PC-3 (cell line): ENCODE measurements at regions of chr5 and their contacts with region 1.

Region 1: DNA sequence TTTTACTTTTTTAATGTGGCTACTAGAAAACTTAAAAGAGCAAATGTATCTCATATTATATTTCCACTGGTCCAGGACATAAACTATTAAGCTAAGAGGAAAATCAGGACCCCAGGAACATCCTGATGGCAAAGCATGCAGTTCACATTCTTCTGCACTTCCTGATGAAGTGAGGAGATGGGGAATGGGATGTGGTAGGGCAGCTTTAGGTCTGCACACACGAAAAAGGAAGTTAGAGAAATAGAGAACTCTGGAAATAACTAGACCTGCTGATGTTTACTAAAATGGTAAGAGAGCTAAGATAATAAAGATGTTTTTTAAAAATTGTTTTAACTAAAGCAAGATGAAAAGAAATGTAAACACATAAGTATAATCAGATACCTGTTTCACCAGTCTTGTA is 39.7 kb upstream of the NIPBL start:
- DNase-seq: no peak
- ATAC-seq: no peak
- H3K4me3 ChIP-seq: no peak overlapping the region
- H3K27ac ChIP-seq: no peak overlapping the region
- H3K4me1 ChIP-seq: no peaks in the 10 kb centered on the region
- H3K27me3 ChIP-seq: peaks cover 73% of the 10 kb centered on the region
- CTCF ChIP-seq: no peak

Region 2: DNA sequence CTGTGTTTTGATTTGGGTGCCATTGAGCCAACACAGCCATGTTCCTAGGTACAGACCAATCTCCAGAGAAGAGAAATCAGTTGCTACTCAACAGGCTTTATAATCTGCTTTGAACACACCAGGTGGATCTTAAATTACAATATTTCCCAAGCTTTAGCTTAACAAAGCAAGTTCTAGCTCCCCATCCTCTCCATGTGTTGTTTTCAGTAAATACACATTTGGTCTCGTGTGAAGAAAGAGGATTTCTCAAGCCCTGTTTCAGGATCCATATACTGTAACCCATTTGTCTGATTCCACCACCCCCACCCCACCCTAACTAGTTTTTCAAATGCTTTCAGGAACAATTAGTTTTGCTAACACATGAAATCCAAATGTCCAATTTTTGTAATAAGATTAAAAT is 69.8 kb before region 1 on chr5:
- CTCF ChIA-PET with region 1: interaction called, 11 read pairs
- POLR2A ChIA-PET with region 1: no interaction called
- intact Hi-C with region 1: no loop called
- DNase-seq: no peak
- ATAC-seq: no peak
- H3K4me3 ChIP-seq: no peak overlapping the region
- H3K27ac ChIP-seq: no peak overlapping the region
- H3K4me1 ChIP-seq: no peaks in the 10 kb centered on the region
- H3K27me3 ChIP-seq: peaks cover 28% of the 10 kb centered on the region
- CTCF ChIP-seq: no peak